Mammary epithelial cell (primary cell): ENCODE measurements at regions of chr16 and their contacts with region 1.

Region 1: DNA sequence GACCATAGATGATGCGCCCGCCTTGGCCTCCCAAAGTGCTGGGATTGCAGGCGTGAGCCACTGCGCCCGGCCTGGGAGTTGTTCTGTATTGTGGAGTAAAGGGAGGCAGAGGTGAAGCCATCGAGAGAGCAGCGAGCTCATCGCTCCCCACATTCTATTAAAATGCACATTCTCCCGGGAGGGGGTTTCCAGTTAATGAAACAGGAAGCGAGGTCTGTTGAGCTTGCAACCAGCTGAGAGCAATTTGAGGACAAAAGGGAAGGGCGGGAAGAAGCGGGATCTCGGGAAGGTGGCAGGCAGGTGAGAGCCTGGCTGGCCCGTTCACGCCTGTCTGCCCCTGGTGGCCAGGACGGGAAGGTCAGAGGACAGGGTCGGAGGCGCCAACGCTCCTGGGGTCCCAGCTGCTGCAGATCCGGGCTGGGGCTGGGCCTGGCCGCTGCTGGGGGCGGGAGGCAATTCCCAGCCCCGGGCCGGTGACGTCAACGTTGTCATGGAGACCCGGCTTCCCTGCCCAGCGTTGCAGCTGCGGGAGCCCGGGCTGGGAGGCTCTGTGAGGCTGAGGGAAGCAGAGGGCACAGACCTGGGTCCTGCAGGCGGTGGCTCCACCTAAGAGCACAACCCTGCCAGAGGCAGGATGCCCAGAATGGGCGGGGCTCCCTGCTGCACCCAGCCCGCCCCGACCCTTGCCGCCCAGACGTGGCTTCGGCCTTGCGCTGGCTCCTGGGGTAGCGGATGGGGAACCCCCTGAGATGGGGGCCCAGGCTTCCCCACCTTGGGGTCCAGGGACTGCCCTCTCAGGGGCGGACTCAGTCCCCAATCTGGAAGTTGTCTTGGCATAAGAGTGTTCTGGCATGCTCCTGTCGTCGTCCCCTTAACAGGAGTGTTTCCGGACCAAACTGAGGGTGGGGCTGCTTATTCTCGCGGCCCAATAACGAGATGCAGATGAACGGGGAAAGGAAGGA is 48.7 kb upstream of the PLCG2 start:
- DNase-seq: peak; percentile 53
- H3K4me3 ChIP-seq: peak overlapping the region in 2 of 3 experiments; percentile 3 to 29
- H3K27ac ChIP-seq: peak overlapping the region; percentile 15
- H3K4me1 ChIP-seq: peaks cover 12% of the 10 kb centered on the region
- H3K27me3 ChIP-seq: no peaks in the 10 kb centered on the region
- CTCF ChIP-seq: peak; percentile 54 to 75

Region 2: GRCh38 chr16:81376880-81377279 is 353.5 kb before region 1 on chr16:
- CTCF ChIA-PET with region 1: no interaction called
- dilution Hi-C with region 1: loop called (anchors 5 kb)
- in situ Hi-C with region 1: no loop called
- intact Hi-C with region 1: no loop called
- DNase-seq: peak; percentile 88
- H3K4me3 ChIP-seq: no peak overlapping the region
- H3K27ac ChIP-seq: no peak overlapping the region
- H3K4me1 ChIP-seq: peaks cover 10% of the 10 kb centered on the region
- H3K27me3 ChIP-seq: no peaks in the 10 kb centered on the region
- CTCF ChIP-seq: no peak

Region 3: DNA sequence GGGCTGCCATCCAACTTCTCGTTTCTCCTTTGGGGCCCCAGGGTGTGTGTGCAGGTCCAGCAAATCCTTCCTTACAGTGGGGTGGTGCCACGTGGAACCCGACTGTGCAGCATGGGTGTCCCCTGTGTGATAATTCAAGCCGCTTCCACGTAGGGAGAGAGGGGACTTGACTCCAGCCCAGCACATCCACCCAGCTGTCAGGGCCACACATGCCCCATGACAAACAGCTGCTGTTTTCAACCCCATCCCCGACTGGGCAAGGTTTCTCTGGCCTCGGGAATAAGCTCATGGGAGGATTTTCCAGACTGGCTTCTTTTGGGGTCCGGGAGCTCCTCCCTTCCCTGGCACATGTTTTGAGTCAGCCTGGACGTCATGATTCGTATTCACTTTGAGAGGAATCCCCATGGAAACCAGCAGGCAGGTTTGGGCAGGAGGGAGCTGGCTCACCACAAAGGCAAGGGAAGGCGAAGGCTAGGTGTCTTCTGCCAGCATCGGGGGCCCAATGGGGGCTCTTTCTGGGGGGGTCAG is 129.4 kb before region 1 on chr16:
- CTCF ChIA-PET with region 1: interaction called, 24 read pairs
- dilution Hi-C with region 1: no loop called
- in situ Hi-C with region 1: no loop called
- intact Hi-C with region 1: no loop called
- DNase-seq: peak; percentile 97
- H3K4me3 ChIP-seq: no peak overlapping the region
- H3K27ac ChIP-seq: peak overlapping the region; percentile 93
- H3K4me1 ChIP-seq: peaks cover 54% of the 10 kb centered on the region
- H3K27me3 ChIP-seq: no peaks in the 10 kb centered on the region
- CTCF ChIP-seq: no peak

Region 4: DNA sequence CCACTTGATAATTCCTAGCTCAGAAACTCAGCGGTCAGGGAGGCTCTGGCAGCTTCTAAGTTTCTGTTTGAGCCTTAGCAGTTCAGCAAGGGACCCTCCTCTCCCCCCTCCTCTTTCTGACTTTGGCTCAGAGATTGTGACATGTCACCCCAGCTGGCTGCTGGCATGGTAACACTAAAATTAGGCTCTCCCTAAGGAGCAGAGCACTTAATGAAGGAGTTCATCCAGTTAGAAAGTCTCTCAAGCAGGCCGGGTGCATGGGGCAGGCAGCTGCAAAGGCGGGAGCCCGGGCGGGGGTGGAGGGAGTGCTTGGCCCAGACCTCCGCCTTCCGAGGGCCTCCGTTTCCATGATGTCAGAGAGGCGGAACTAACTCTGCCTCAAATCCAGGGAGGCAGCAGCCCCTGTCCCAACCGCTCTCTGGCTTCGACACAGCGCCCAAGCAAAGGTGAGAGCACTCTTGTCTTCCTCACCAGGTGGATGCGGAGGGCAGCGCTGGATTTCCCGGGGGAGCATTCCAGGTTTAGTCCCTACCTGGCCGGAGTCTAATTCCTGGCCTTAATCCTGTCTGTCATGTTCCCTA is 79.3 kb before region 1 on chr16:
- CTCF ChIA-PET with region 1: no interaction called
- dilution Hi-C with region 1: no loop called
- in situ Hi-C with region 1: no loop called
- intact Hi-C with region 1: no loop called
- DNase-seq: no peak
- H3K4me3 ChIP-seq: no peak overlapping the region
- H3K27ac ChIP-seq: no peak overlapping the region
- H3K4me1 ChIP-seq: peaks cover 15% of the 10 kb centered on the region
- H3K27me3 ChIP-seq: no peaks in the 10 kb centered on the region
- CTCF ChIP-seq: no peak

Region 5: GRCh38 chr16:81901483-81901882 is 171.1 kb after region 1 on chr16:
- CTCF ChIA-PET with region 1: no interaction called
- dilution Hi-C with region 1: no loop called
- in situ Hi-C with region 1: no loop called
- intact Hi-C with region 1: no loop called
- DNase-seq: no peak
- H3K4me3 ChIP-seq: no peak overlapping the region
- H3K27ac ChIP-seq: no peak overlapping the region
- H3K4me1 ChIP-seq: no peaks in the 10 kb centered on the region
- H3K27me3 ChIP-seq: no peaks in the 10 kb centered on the region
- CTCF ChIP-seq: no peak